ENCODE measurements at regions of chr22 and their contacts with region 1.

Region 1: GRCh38 chr22:39532215-39533071 is at the start of gene RPS19BP1:
- DNase-seq: peak; percentile 100
- H3K4me3 ChIP-seq: peak within 1 kb of the TSS; percentile 87
- H3K27ac ChIP-seq: peak within 1 kb of the TSS; percentile 30
- H3K4me1 ChIP-seq: peaks cover 44% of the 10 kb centered on the region
- H3K27me3 ChIP-seq: no peaks in the 10 kb centered on the region
- CTCF ChIP-seq: peak; percentile 24; the same call in 1 of the 2 replicates
- total RNA-seq, gene RPS19BP1: 60.7 and 94.3 TPM in 2 replicates

Region 2: DNA sequence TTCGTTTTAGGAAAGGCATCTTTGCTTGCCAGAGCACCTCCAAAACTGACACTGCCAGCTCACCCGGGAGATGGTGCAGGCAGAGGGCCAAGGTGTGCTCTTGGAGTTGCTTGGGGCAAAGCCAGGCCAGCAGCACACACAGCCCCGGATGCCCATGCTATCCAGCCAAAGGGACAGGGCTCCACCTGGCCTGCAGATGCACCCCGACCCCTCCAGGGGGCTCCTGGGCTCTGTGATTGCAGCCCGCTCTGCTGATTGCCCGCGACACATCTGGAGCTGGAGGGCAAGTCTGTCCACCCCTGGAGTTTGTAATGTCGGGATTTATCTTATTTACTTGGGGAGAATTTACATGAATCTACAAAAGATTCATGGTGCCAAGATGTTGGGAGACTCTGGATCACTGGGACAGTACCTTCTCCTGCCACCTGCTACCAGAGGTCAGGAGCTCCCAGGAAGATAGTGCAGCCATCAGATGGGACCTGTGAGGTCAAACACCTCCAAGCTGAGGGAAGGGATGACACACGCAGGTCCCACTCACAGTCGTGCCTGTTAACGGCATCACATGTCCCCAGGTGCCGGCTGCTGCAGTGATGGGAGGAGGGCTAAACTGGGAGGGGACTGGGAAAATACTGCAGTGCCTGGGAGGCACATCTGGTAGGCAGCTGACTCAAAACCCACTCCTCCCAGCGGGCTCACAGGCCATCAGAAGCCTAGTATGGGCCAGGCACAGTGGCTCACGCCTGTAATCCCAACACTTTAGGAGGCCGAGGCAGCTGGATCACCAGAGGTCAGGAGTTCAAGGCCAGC is 397.1 kb before region 1 on chr22:
- CTCF ChIA-PET with region 1: interaction called, 4 read pairs
- POLR2A ChIA-PET with region 1: no interaction called
- intact Hi-C with region 1: loop called (anchors 5 kb)
- DNase-seq: peak in 1 of 2 experiments; percentile 71
- H3K4me3 ChIP-seq: no peak overlapping the region
- H3K27ac ChIP-seq: no peak overlapping the region
- H3K4me1 ChIP-seq: peaks cover 7% of the 10 kb centered on the region
- H3K27me3 ChIP-seq: no peaks in the 10 kb centered on the region
- CTCF ChIP-seq: peak; percentile 78

Region 3: GRCh38 chr22:39502109-39502788 is 30.2 kb before region 1 on chr22 and contains the start of gene MIEF1:
- CTCF ChIA-PET with region 1: interaction called, 5 read pairs
- POLR2A ChIA-PET with region 1: no interaction called
- intact Hi-C with region 1: loop called (anchors 1 kb)
- DNase-seq: peak; percentile 94 to 97
- H3K4me3 ChIP-seq: peak within 1 kb of the TSS; percentile 92
- H3K27ac ChIP-seq: peak within 1 kb of the TSS; percentile 20; the same call in 1 of the 2 replicates
- H3K4me1 ChIP-seq: peaks cover 28% of the 10 kb centered on the region
- H3K27me3 ChIP-seq: no peaks in the 10 kb centered on the region
- CTCF ChIP-seq: no peak
- total RNA-seq, gene MIEF1: 36.9 TPM in 2 replicates

Region 4: DNA sequence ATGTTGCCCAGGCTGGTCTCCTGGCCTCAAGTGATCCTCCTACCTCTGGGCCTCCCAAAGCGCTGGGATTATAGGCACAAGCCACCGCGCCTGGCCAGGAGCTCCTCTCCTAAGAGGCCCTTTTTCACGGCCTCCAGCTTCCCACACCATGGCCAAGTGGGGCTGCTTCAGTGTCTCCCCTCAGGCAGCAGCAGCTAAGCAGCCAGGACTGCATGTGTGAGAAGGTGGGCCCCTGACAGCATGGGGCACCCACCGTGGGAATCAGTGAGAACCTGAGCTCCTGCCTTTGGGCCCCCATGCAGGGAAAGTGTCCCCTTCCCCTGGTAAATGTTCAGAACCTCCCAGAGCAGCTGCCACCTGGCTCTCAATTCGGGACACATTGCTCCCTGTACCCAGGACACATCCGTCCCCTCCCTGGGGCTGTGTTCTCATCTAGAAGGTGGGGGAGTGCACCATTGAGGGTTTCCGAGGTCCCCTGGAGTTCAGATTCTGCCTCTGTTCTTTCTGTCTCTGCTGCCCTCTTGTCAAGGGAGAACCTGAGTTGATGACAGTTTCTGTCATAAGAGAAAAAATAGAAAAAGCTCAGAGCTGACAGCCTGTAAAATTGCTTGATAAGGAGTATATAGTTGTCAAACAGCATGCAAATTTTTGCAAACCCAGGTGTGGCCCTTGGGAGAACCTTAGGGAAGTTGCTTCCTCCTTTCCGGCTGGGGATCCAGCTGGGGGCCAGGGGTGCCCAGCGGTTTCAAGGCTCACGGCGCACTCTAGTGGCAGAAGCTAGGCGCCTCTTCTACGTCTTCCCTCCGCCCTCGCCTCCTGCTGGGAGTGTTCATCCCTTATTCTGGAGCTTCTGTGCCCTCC is 492.0 kb after region 1 on chr22:
- CTCF ChIA-PET with region 1: interaction called, 11 read pairs
- POLR2A ChIA-PET with region 1: no interaction called
- intact Hi-C with region 1: loop called (anchors 1 kb)
- DNase-seq: peak; percentile 65 to 75
- H3K4me3 ChIP-seq: no peak overlapping the region
- H3K27ac ChIP-seq: no peak overlapping the region
- H3K4me1 ChIP-seq: no peaks in the 10 kb centered on the region
- H3K27me3 ChIP-seq: no peaks in the 10 kb centered on the region
- CTCF ChIP-seq: peak; percentile 97